HEK293 (cell line): ENCODE measurements at regions of chr7 and their contacts with region 1.

Region 1: DNA sequence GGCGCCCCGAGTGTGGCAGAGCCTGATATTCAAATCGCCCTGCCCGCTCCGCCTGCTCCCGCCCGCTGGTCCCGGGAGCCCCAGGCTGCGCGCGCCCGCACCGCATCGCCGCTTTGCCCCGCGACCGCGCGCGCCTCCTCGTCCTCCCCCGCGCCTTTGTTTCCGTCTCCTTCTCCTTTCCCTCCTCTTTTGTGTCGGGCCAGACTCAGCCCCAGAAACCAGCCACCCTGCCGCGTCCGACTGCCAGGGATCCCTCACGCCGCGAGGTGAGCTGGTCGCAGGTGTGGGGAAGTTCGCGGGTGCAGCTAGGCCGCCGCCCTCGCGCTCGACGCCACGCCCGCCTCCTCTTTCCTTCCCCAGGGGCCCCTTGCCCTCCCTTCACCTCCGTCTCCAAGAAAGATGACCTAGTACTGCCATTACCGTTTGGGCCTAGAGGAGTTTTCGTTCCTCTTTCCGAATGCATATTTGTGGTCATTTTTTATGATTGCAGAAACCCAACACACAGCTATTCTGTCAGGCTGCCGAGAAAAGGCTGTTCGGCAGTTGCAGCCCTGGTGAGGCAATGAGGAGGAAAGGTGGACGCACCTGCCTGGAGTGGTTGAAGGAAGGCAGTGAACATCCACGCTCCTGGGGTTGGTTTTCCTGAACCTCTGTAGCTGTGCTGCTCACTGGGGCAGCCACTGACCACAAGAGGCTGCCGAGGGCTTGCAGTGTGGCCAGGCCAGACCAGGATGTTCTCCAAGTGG is 107.3 kb downstream of the SNX10 start:
- H3K4me3 ChIP-seq: peak overlapping the region; percentile 61
- H3K27ac ChIP-seq: peak overlapping the region; percentile 92
- H3K4me1 ChIP-seq: peaks cover 17% of the 10 kb centered on the region
- CTCF ChIP-seq: no peak

Region 2: GRCh38 chr7:26417911-26418413 is 19.0 kb after region 1 on chr7:
- CTCF ChIA-PET with region 1: no interaction called
- POLR2A ChIA-PET with region 1: no interaction called
- H3K4me3 ChIP-seq: no peak overlapping the region
- H3K27ac ChIP-seq: peak overlapping the region; percentile 35; the same call in 1 of the 2 replicates
- H3K4me1 ChIP-seq: peaks cover 5% of the 10 kb centered on the region; the same call in 1 of the 2 replicates
- CTCF ChIP-seq: no peak

Region 3: DNA sequence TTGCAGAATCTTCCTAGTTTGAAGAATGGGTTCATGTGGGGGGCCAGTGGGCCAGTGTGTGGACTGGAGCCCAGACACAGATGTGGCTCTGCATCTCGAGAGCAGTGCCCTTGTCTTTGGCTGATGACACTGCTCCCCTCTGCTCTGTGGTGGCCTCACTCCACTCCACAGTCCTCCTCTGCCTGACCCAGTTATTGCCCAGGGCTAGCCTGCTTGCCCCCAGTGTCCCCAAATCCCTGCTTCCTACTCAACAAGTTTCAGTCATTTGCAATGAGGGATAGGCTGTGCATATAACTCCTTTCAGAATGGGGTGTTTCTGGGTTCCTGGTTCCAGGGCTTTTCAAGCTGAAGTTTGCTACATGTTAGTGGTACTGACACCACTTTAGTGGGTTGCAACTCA is 70.3 kb after region 1 on chr7:
- CTCF ChIA-PET with region 1: no interaction called
- POLR2A ChIA-PET with region 1: interaction called, 16 read pairs
- H3K4me3 ChIP-seq: no peak overlapping the region
- H3K27ac ChIP-seq: no peak overlapping the region
- H3K4me1 ChIP-seq: no peaks in the 10 kb centered on the region
- CTCF ChIP-seq: no peak